Activated CD4-positive, alpha-beta T cell treated with anti-CD3 and anti-CD28 coated beads, Interleukin-2, amount 10 ng/mL, durations not matched to agents 24 days and 14 days (primary cell): ENCODE measurements at regions of chr2 and their contacts with region 1.

Region 1: DNA sequence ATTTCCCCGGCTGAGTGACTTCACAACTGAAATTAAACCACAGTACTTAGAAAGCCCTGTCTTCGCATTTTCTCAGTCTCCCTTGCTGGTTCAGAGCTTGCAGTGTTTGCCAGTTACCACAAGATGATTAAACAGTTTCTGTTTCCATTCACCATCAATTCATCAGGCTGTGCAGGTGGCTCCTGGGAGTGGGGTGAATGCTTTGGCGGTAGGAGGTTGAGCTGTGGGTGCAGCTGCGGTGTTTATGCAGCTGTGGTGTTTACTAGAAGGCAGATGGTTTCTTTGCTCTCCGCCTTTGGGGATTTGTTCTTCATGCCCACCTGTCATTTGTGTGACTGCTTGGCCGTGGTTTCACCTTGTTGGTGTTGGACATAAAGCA is 16.1 kb downstream of the ACOXL start:
- DNase-seq: peak; percentile 94
- H3K4me3 Mint-ChIP-seq: peak overlapping the region; percentile 76
- H3K27ac Mint-ChIP-seq: peak overlapping the region; percentile 64
- H3K4me1 Mint-ChIP-seq: peaks cover 31% of the 10 kb centered on the region
- H3K27me3 Mint-ChIP-seq: peaks cover 51% of the 10 kb centered on the region

Region 2: DNA sequence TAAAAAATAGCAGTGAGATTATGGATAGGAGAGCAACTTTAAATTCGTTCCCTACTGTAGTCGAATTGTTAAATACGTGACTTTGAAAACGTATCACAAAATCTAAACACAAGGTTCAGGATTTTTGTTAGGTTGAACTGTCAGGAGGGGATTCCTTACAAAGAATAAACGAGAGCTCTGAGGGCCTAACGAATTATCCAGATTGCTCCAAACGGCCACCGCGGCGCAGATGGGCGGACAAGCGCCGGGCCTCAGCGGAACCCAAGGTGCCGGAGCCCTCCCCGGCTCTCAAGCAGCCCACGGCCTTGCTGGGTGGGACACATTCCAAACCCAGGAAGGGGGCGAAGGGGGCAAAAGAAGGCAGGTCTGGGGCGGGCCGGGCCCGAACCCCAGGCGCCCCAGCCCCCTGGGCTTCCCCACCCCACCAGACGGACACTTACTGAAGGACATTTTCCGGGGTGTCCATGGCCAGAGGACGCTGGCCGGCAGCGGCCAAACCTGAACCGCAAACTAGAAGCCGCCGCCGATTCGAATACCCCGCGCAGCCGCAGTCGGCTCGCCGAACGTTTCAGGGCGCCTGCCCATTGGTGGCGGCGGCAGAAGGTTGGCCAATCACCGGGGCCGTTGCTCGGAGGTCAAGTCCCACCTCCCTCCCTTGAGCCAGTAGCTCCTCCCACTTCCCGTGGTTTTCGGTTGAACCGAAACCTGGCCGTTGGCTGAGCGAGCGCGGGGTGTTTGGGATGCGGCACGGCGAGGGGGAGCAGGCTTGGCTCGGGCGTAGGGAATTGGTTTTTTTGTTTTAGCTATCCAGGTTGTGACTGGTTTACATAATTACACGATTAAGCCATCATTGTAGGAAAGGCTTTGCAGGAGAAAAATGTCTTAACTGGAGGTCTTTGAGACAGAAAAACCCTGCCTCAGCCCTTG is 70.7 kb before region 1 on chr2 and contains the start of gene BUB1:
- intact Hi-C with region 1: loop called (anchors 1 kb)
- DNase-seq: peak; percentile 99
- H3K4me3 Mint-ChIP-seq: peak within 1 kb of the TSS; percentile 98
- H3K27ac Mint-ChIP-seq: peak within 1 kb of the TSS; percentile 99
- H3K4me1 Mint-ChIP-seq: peaks cover 33% of the 10 kb centered on the region
- H3K27me3 Mint-ChIP-seq: peaks cover 9% of the 10 kb centered on the region
- total RNA-seq, gene BUB1: 58.4 and 61.7 TPM in 2 replicates

Region 3: GRCh38 chr2:110768604-110769003 is 20.1 kb after region 1 on chr2:
- intact Hi-C with region 1: no loop called
- DNase-seq: no peak
- H3K4me3 Mint-ChIP-seq: no peak overlapping the region
- H3K27ac Mint-ChIP-seq: no peak overlapping the region
- H3K4me1 Mint-ChIP-seq: no peaks in the 10 kb centered on the region
- H3K27me3 Mint-ChIP-seq: peaks cover 45% of the 10 kb centered on the region

Region 4: DNA sequence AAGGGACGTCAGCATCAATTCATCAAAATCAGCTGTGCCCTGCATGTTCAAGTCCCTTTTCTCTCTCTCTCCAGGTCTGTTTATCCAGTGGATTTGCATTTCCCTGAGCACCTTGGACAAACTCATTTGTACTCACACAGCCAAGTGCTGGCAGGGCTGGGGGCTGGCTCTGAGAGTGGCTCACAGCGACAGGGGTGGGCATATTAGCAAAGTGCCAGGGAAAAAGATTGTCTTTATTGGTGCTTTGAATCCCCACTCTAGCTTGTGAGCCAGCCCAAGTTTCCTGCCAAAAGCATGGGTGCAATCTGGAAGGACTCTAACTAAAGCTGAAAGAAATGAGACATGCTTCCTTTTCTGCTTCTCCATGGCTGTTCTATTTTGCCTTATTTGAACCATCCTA is 40.5 kb after region 1 on chr2:
- intact Hi-C with region 1: no loop called
- DNase-seq: no peak
- H3K4me3 Mint-ChIP-seq: no peak overlapping the region
- H3K27ac Mint-ChIP-seq: no peak overlapping the region
- H3K4me1 Mint-ChIP-seq: no peaks in the 10 kb centered on the region
- H3K27me3 Mint-ChIP-seq: peaks cover 58% of the 10 kb centered on the region

Region 5: GRCh38 chr2:110843959-110844510 is 95.6 kb after region 1 on chr2:
- intact Hi-C with region 1: loop called (anchors 1 kb)
- DNase-seq: no peak
- H3K4me3 Mint-ChIP-seq: peak overlapping the region; percentile 4
- H3K27ac Mint-ChIP-seq: peak overlapping the region; percentile 81
- H3K4me1 Mint-ChIP-seq: peaks cover 52% of the 10 kb centered on the region
- H3K27me3 Mint-ChIP-seq: peaks cover 21% of the 10 kb centered on the region

Region 6: DNA sequence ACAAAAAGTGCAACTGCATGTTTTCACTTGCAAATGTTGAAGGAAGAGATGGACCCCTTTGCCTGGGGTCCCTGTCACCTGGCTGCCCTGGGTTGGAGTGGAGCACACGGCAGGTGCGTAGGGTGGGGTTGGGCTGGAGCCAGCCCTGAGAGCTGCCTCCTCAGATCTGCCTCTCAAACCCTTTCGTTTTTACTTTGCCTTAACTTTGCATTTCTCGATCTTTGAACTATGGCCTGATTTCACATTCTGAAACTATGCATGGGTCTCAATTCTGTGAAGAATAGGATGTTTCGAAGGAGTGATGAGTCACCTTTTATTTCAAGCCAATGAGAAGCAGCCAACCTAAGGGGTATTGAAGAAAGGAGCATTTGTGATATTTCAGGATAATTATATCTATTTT is 116.7 kb after region 1 on chr2:
- intact Hi-C with region 1: loop called (anchors 1 kb)
- DNase-seq: peak; percentile 82
- H3K4me3 Mint-ChIP-seq: peak overlapping the region; percentile 47
- H3K27ac Mint-ChIP-seq: peak overlapping the region; percentile 43
- H3K4me1 Mint-ChIP-seq: peaks cover 66% of the 10 kb centered on the region
- H3K27me3 Mint-ChIP-seq: peaks cover 32% of the 10 kb centered on the region

Region 7: GRCh38 chr2:111111101-111111755 is 362.8 kb after region 1 on chr2:
- intact Hi-C with region 1: loop called (anchors 5 kb)
- DNase-seq: no peak
- H3K4me3 Mint-ChIP-seq: no peak overlapping the region
- H3K27ac Mint-ChIP-seq: peak overlapping the region; percentile 34
- H3K4me1 Mint-ChIP-seq: peaks cover 18% of the 10 kb centered on the region
- H3K27me3 Mint-ChIP-seq: peaks cover 55% of the 10 kb centered on the region